Transverse colon (tissue), 4 donors: ENCODE measurements at regions of chr11 and their contacts with region 1.

Region 1: DNA sequence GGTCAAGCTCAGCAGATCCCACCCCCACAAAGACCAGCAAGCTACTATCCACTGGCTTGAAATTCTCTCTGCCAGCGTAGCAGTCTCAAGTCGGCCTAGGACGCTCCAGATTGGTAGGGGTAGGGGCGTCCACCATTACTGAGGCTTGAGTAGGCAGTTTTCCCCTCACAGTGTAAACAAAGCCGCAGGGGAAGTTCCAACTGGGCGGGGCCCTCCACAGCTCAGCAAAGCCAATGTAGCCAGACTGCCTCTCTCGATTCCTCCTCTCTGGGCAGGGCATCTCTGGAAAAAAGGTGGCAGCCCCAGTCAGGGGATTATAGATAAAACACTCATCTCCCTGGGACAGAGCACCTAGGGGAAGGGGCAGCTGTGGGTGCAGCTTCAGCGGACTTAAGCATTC is 1064.9 kb upstream of the TENM4 start:
- DNase-seq: no peak
- H3K4me3 ChIP-seq: no peak overlapping the region
- H3K27ac ChIP-seq: no peak overlapping the region
- H3K4me1 ChIP-seq: no peaks in the 10 kb centered on the region
- H3K27me3 ChIP-seq: no peaks in the 10 kb centered on the region
- CTCF ChIP-seq: no peak
- EP300 ChIP-seq: no peak
- POLR2A ChIP-seq: no peak

Region 2: GRCh38 chr11:80486678-80487077 is 19.1 kb before region 1 on chr11:
- in situ Hi-C with region 1: no loop called
- intact Hi-C with region 1: loop called (anchors 1 kb)
- DNase-seq: no peak
- H3K4me3 ChIP-seq: no peak overlapping the region
- H3K27ac ChIP-seq: no peak overlapping the region
- H3K4me1 ChIP-seq: no peaks in the 10 kb centered on the region
- H3K27me3 ChIP-seq: no peaks in the 10 kb centered on the region
- CTCF ChIP-seq: no peak
- EP300 ChIP-seq: no peak
- POLR2A ChIP-seq: no peak